Heart left ventricle (tissue), 16 donors: ENCODE measurements at regions of chr13 and their contacts with region 1.

Region 1: DNA sequence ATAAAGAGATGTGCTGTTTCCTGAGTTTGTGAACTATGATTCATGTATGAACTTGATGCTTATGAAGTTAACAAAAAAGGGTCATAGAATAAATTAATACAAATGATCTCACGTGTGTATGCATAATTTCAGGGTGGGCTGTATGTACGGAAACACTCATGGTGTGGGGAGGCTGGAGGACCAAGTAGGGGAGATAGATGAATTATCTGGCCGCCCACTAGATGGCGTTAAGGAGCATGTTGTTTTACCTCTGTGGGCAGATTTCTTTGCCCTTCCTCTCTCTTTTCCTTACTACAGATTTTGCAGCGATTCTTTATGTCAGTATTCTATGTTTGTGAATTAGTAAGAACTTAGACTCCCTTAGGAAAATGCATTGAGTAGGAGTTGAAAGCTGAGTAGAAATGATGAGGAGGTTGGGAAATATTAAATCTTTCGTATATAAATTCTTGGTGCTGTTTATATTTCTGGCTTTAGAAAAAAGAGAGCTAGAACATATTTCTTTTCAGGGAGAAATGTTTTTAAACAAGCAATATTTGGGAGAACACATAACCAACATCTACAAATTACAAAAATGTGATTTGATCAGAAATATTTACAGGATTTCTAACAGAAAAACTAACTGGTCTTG is 47.4 kb upstream of the TMTC4 start:
- DNase-seq: peak in 1 of 5 donors; percentile 17
- ATAC-seq: peak in 1 of 4 donors; percentile 41
- H3K4me3 ChIP-seq: no peak overlapping the region
- H3K27ac ChIP-seq: no peak overlapping the region
- H3K4me1 ChIP-seq: no peaks in the 10 kb centered on the region
- H3K27me3 ChIP-seq: peaks cover 0 to 10% (median 4%) of the 10 kb centered on the region in 9 donors
- CTCF ChIP-seq: peak; percentile 39 to 72 (median 60)
- POLR2A ChIP-seq: no peak

Region 2: GRCh38 chr13:101127741-101128353 is 405.8 kb after region 1 on chr13:
- intact Hi-C with region 1: loop called in 1 of 10 experiments (anchors 5 kb)
- DNase-seq: no peak
- ATAC-seq: peak in 2 of 4 donors; percentile 47 to 52
- H3K4me3 ChIP-seq: no peak overlapping the region
- H3K27ac ChIP-seq: no peak overlapping the region
- H3K4me1 ChIP-seq: no peaks in the 10 kb centered on the region
- H3K27me3 ChIP-seq: no peaks in the 10 kb centered on the region
- CTCF ChIP-seq: peak; percentile 45 to 77 (median 67)
- POLR2A ChIP-seq: no peak